ENCODE measurements at regions of chr10 and their contacts with region 1.

Region 1: DNA sequence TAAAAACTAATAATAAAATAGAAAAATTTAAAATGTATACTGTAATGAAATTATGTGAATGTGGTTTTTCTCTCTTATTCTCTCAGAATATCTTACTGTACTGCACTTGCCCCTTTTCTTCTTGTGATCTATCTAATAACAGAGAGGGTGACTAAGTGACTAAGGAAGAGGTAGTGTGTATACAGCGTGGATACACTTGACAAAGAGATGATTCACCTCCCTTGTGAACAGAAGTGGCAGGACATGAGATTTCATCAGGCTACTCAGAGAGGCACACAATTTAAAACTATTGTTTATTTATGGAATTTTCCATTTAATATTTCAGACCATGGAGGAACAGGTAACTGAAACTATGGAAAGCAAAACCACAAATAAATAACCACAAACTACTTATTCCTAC is 806.6 kb upstream of the GHITM start:
- DNase-seq: peak; percentile 66
- H3K4me3 ChIP-seq: no peak overlapping the region
- H3K27ac ChIP-seq: peak overlapping the region; percentile 14
- H3K4me1 ChIP-seq: peaks cover 17% of the 10 kb centered on the region
- H3K27me3 ChIP-seq: no peaks in the 10 kb centered on the region
- CTCF ChIP-seq: no peak

Region 2: GRCh38 chr10:83346216-83346910 is 13.7 kb after region 1 on chr10:
- CTCF ChIA-PET with region 1: no interaction called
- dilution Hi-C with region 1: no loop called
- in situ Hi-C with region 1: no loop called
- intact Hi-C with region 1: loop called (anchors 2 kb)
- DNase-seq: peak; percentile 70
- H3K4me3 ChIP-seq: no peak overlapping the region
- H3K27ac ChIP-seq: no peak overlapping the region
- H3K4me1 ChIP-seq: peaks cover 12% of the 10 kb centered on the region
- H3K27me3 ChIP-seq: no peaks in the 10 kb centered on the region
- CTCF ChIP-seq: no peak